GM10248 (cell line): ENCODE measurements at regions of chr11 and their contacts with region 1.

Region 1: GRCh38 chr11:765025-765801 is 12.1 kb downstream of the GATD1 start:
- DNase-seq: peak; percentile 70
- CTCF ChIP-seq: peak; percentile 77

Region 2: DNA sequence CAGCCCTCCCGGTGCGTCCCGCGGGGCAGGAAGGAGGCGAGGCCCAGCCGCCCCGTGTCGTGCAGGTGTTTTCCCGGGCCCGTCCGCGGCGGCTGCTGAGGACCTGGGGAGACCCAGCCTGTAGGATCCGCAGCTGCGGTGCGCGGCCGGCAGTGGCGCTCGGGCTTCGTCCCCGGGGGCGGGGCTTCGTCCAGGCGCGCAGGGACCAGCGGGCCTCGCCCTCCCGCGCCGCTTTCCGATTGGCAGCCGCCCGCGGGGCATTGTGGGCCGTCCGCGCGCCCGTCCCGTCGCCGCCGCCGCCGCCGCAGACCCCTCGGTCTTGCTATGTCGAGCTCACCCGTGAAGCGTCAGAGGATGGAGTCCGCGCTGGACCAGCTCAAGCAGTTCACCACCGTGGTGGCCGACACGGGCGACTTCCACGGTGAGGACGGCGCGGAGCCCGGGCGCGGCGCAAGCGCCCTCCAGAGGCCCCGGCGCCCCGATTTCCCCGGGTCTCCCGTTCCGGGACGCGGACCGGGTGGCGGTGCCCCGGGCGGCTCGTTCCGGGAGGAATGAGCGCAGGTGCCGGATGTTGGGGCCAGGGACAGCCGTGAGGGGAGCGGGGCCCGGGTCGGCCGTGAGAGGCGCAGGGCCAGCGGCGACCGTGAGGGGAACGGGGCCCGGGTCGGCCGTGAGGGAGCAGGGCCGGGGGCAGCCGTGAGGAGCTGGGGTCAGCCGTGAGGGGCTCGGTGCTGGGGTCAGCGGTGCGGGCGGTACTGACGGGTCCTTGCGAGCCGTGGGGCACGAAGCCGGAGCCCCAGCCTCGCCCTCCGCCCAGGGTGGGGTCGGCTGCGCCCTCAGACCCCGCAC is 17.8 kb before region 1 on chr11 and contains the start of gene TALDO1:
- CTCF ChIA-PET with region 1: interaction called, 13 read pairs
- POLR2A ChIA-PET with region 1: no interaction called
- DNase-seq: peak; percentile 97
- CTCF ChIP-seq: peak; percentile 28

Region 3: DNA sequence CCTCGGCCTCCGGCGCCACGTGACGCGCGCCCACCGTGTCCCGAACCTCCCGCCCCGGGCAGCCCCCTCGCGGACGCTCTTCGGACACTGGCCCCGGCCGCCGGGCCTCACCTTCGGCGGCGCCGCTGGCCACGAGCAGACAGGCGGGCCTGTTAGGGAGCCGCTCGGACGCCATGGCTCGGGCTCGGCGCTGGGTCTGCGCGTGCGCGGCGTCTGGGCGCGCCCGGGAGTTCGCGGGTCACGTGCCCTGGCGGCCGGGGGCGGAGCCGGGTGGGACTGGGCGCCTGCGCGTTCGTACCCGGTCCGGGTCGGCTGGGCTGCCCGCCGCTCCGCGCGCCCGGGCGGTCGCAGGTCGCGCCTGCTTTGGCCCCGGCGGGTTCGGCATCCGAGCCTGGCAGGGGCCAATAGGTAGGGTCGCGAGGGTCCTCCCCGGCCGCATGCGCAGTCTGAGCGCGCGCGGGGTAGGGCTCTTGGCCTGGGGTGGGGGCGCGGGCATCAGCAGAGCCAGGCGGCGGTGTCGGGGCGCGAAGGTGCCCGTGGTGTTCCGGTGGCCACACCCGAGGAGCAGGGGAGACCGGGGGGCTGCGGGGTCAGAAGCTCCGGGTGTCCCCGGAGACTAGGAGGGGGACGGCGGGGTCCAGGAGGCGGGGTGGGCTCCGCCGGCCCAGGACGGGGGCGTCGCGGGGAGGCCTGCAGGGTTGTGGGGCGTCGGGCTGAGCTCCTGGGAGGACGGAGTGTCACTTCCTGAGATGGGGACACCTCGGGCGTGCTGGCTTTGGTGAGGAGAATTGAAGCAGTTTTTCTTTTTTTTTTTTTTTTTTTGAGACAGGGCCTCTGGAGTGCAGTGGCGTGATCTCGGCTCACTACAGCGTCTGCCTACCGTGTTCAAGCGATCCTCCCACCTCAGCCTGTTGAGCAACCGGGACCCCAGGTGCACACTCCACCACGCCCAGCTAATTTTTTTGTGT is 12.4 kb after region 1 on chr11 and contains the start of gene GATD1:
- CTCF ChIA-PET with region 1: interaction called, 11 read pairs
- POLR2A ChIA-PET with region 1: no interaction called
- DNase-seq: peak; percentile 100
- CTCF ChIP-seq: no peak